ENCODE measurements at regions of chr5 and their contacts with region 1.

Region 1: DNA sequence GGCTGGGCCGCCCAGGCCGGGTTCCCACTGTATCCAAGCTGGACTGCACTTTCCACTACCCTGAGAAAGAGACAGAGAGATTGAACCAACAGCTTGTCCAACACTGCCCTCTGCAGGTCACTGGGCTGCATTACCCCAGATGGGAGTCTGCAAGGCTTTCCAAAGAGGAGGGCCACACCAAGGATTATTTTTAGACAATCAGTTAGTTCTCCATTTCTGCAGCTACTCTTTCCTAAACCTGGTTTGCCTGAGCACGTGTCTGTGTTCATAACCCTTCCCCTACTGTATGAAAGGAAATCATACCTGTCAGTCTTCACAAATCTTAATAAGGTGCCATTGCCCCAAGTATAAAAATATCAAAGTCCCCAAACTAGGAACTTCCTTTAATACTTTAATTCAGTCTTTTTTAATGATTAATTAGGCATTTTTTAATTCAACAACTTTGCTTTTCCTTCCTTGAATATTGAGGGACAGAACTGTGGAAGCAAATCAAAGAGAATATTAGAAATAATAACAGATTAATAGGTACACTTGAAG is 13.4 kb upstream of the FGF1 start:
- DNase-seq: peak; percentile 84

Region 2: DNA sequence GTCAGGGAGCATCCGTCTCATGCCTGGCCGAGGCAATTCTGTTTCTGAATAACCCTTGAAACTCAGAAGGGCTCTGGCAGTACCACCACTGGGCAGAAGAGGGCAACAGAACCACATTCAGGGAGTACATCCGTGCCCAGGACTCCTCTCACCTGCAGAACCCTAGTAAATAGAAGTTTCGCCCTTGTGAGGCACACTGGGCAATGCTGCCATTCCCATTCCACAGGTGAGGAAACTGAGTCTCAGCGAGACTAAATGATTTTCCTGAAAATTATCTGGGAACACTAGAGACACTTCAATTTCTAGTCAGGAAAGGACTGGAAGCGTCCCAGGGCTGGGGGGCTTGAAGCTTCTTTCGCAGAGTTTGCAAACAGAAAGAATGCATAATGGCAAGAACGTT is 88.1 kb before region 1 on chr5:
- CTCF ChIA-PET with region 1: interaction called, 21 read pairs
- POLR2A ChIA-PET with region 1: no interaction called
- DNase-seq: peak; percentile 75

Region 3: DNA sequence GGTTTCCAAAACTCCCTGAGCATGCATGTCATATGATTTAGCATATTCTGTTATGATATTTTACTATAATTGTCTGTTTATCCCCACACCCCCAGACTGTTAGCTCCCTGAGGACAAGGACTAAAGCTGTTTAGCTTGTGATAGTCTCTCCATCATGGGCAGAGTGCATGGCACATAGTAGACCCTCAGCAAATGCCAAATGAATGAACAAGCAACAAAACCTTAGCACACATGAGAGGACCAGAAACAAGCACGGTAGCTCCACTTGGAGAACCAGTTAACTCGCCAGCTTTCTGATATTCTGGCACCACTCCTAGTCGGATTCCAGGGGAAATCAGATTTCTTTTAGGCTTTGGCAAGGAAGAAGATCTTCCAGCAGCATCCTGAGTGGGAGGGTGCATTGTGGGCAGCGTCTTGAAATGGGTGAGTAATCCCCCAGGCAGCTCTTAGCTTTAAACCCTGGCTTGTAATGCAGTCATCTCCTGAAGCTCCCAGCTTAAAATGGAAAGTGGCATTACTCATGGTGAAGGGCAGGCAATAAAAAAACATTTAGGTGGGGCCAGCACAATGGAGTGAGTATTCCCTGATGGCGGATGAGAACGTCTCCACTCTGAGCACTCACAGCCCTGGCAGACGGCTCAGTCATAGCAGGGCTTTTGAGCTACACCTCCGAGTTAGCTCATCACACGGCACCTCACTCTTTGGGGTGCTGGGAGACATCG is 54.5 kb before region 1 on chr5:
- CTCF ChIA-PET with region 1: interaction called, 13 read pairs
- POLR2A ChIA-PET with region 1: no interaction called
- DNase-seq: peak; percentile 32

Region 4: GRCh38 chr5:142726188-142726731 is 27.0 kb after region 1 on chr5:
- CTCF ChIA-PET with region 1: no interaction called
- POLR2A ChIA-PET with region 1: no interaction called
- DNase-seq: no peak